ENCODE measurements at regions of chr11 and their contacts with region 1.

Region 1: DNA sequence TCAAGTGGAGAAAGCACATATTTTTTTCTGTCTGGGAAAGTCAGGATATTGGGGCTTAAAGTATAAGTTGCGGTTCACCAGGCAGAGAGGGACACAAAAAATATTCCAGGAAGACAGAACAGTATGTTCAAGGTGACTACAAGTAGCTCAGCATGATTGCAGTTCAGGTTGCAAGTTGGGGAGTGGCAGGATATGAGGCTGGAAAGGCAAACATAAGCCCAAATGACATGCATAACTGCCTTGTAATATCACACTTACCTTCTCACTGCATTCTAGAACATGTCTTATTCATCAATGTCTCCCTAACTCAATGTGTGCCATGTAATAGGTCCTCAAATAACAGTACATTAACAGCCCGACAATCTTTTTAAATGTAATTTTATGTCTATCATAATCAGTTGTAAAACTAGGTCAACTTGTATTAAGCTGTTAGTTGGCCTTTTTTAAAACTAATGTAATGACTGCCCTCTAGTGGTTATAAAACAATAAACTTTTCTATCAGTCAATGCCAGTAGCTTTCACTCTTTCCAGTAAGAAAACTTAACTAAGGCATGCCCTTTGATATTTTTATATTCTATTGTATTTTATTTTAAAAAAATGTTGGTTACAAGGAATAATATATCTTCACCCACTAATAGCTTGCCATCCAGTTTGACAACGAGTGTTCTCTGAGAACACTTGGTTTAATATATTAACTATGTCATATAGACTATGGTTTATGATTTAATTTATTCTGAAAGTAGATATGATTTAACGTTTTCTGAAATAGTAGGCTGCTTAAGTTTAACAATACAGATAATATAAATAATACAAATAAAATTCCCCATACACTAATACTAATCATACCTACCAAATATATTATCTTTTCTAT is 39.4 kb upstream of the CFAP300 start:
- H3K4me3 ChIP-seq: no peak overlapping the region
- H3K27ac ChIP-seq: no peak overlapping the region
- H3K4me1 ChIP-seq: no peaks in the 10 kb centered on the region
- CTCF ChIP-seq: no peak

Region 2: DNA sequence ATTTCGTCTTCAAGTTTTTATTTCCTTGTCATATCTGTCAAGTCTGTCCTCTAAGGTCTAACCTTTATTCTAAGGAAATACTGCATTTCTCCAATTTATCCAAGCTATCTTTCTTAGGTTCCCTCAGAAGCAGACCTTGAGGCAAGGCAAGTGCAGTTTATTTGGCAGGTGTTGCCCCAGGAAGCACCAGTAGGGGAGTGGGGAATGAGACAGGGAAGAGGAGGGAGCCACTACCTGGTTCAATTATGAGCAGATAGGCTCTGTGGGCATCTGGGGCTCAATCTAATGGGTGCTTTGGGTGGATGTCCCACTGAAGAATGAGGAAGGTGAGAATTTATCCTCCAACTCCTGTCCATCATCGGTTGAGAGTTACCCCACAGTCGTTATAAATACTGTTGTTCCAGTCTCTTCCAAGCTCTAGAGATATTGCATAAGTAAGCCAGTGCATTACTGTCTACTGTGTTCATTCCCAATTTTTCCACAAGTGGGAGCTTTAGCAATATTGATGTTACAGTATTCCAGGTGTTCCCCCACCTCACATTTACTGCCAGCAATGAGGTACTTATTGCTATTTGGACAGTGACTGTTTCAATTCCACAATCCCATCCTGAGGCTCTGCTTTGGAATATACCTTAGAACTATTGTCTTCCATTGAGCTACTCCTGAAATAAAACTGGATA is 247.9 kb before region 1 on chr11:
- CTCF ChIA-PET with region 1: interaction called, 15 read pairs
- POLR2A ChIA-PET with region 1: no interaction called
- H3K4me3 ChIP-seq: no peak overlapping the region
- H3K27ac ChIP-seq: no peak overlapping the region
- H3K4me1 ChIP-seq: no peaks in the 10 kb centered on the region
- CTCF ChIP-seq: no peak

Region 3: DNA sequence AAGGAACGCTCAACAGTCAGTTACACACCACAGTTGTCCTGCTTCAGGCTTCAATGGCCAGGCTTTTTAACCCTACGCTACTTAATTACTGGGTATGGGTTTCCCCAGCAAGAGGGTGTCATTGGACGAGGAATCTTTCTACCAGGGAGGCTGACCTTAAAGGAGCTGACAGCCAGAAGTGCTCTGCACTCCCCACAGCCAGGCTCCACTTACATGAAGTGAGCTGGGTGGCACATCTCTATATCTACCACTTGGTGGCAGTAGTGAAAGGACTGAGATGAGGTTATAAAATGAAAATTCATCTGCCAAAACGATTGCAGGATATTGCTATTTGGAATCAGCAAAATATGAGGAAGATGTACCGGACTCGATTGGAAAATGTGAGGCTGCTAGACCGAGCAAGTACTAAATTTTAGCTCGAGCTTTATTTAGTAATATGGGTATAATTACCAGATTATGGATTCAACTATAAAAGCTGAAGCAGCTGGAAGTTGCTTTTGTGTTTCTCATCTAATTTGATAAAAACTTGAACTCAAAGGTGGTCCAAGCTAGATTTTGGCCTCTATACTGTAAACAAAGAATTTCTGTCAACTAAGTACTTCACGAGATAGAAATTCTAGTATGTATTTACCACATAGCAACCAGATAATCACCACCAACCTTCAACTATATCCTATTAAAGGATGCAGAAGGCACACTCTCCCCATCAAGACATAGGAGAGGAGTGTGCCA is 146.9 kb before region 1 on chr11:
- CTCF ChIA-PET with region 1: interaction called, 196 read pairs
- POLR2A ChIA-PET with region 1: interaction called, 3 read pairs
- H3K4me3 ChIP-seq: no peak overlapping the region
- H3K27ac ChIP-seq: no peak overlapping the region
- H3K4me1 ChIP-seq: no peaks in the 10 kb centered on the region
- CTCF ChIP-seq: no peak

Region 4: DNA sequence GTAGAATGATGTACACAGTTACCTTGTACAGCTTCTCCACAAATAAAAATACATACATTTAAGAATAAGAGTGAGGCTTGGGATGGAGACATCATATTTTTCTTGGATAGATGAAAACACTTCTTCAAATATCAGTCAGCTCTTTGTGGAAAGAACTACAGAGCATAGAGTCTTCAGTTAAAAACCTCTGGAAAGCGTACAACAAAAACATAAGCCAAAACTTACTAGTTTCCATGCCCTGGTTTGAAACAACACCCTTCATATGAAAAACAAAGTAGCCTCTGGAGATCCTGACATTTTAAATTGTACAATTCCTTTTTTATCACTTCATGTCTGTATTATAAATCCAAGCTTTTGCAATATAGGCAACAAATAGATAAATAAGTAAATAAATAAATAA is 100.0 kb before region 1 on chr11:
- CTCF ChIA-PET with region 1: interaction called, 10 read pairs
- POLR2A ChIA-PET with region 1: no interaction called
- H3K4me3 ChIP-seq: no peak overlapping the region
- H3K27ac ChIP-seq: no peak overlapping the region
- H3K4me1 ChIP-seq: no peaks in the 10 kb centered on the region
- CTCF ChIP-seq: no peak

Region 5: DNA sequence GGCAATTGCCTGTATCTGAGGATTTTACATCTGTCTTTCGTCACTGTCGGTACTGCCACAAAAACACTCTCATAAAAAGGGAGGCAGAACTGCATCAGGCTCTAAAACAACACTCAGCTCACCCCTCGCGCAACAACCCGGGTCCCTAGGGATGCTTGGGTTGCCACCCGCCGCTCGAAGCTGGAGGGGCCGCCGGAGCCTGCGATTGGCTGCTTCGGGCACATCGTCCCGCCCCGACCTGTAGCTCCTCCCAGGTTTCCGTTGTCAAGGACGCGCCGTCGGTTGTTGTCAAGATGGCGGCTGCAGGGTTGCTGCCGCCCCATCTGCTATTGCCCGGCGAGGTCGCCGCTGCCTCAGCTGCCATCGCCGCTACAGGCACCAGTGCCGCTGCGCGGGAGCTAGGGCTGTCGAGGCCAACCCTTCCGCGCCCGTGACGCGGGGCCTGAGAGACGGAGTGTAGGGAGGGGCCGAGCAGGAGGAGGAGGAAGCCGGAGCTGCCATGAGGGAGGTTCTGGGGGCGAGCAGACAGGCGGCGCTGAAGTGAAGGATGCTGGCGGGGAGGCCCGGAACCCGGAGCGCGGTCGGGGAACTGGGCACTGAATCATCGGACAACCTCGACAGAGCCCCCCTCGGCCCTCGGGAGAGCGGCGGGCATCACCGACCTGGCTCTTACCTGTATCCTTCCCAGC is 92.9 kb before region 1 on chr11 and contains the start of gene CEP126:
- CTCF ChIA-PET with region 1: interaction called, 13 read pairs
- POLR2A ChIA-PET with region 1: interaction called, 3 read pairs
- H3K4me3 ChIP-seq: peak within 1 kb of the TSS; percentile 98
- H3K27ac ChIP-seq: peak within 1 kb of the TSS; percentile 50
- H3K4me1 ChIP-seq: peaks cover 7% of the 10 kb centered on the region; the same call in 1 of the 2 replicates
- CTCF ChIP-seq: peak; percentile 84

Region 6: DNA sequence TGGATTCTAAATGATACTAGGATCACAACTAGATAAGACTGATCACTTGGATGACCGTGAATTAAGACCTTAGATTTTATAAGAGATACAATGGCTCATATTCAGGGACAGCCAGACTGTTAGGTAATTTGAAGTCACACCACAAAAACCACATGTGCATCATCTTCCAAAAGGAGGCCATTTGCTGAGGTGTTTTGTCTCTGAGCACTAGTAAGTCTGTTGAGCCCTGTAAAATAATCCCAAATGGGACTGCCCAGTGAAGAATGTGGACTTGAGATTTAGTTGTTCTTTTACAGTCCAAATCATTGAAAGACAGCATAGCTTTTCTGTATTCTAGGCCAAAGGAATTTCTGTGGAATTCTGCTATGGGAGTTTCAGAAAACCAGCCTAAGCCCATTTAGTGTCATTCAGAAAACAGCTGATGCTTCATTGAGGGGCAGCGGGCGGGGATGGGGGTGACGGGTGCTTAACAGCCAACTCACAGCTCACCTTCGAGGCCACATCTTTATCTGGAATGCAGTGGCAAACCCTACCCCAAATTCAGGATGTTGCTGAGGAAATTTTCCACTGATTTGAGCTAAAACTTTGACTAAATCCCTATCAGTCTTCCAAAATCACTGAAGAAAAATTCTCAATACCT is 229.4 kb after region 1 on chr11:
- CTCF ChIA-PET with region 1: no interaction called
- POLR2A ChIA-PET with region 1: no interaction called
- H3K4me3 ChIP-seq: no peak overlapping the region
- H3K27ac ChIP-seq: no peak overlapping the region
- H3K4me1 ChIP-seq: no peaks in the 10 kb centered on the region
- CTCF ChIP-seq: no peak